Prostate gland (tissue), 2 donors: ENCODE measurements at regions of chr14 and their contacts with region 1.

Region 1: GRCh38 chr14:79278798-79279644 is 932.3 kb downstream of the DIO2 start:
- DNase-seq: peak; percentile 92
- H3K4me3 ChIP-seq: peak overlapping the region; percentile 36 to 44
- H3K27ac ChIP-seq: peak overlapping the region; percentile 9 to 18
- H3K4me1 ChIP-seq: peaks cover 2% of the 10 kb centered on the region
- H3K27me3 ChIP-seq: no peaks in the 10 kb centered on the region
- CTCF ChIP-seq: no peak
- POLR2A ChIP-seq: peak; percentile 86

Region 2: DNA sequence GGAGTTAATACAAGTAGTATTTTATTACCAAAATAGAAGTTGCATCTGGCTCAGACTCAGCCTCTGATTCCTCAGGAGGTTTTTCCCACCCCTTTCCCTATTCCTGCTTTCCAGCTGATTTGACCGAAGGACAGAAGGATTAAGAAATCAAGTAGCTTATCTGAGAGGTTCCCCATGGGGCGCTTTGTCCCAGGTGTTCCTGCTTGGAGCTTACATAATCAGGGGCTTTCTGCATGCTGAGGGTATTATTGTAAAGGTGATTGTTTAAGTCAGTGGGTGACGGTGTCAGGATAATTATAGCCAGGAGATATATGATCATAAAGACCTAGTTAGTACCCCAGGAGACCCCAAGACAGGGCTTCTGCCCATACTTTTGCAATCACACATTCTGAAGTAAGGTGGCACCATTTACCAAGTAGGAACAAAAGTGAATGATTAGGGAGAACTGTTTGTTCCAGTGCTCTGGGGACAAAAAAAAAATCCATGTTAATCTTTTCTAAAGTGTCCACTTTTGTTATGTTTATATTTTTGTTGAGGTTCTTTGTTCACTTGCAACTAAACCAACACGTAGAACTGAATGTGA is 187.5 kb before region 1 on chr14:
- intact Hi-C with region 1: loop called (anchors 5 kb)
- DNase-seq: no peak
- H3K4me3 ChIP-seq: no peak overlapping the region
- H3K27ac ChIP-seq: peak overlapping the region in 1 of 2 donors; percentile 20
- H3K4me1 ChIP-seq: peaks cover 9% of the 10 kb centered on the region
- H3K27me3 ChIP-seq: no peaks in the 10 kb centered on the region
- CTCF ChIP-seq: no peak
- POLR2A ChIP-seq: no peak